Activated CD4-positive, alpha-beta memory T cell treated with anti-CD3 and anti-CD28 coated beads, Interleukin-2, amount 10 ng/mL, durations not matched to agents 7 days and 5 days (primary cell): ENCODE measurements at regions of chr17 and their contacts with region 1.

Region 1: DNA sequence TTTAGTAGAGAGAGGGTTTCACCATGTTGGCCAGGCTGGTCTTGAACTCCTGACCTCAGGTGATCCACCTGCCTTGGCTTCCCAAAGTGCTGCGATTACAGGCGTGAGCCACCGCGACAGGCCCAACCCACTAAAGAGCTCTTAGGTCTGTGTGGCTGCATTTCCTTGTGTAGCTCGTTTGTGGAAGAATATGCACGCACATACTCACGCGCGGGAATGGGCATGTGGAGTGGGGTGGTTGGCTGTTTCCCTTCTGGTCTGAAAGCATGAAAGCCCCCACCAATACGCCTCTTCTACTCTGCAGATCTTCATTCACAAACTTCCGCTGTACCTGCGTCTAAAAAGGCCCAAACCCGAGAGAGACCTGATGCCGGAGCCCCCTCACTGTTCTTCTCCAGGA is 10.1 kb downstream of the CHRNB1 start:
- DNase-seq: no peak
- H3K4me3 Mint-ChIP-seq: peak overlapping the region; percentile 91
- H3K27ac Mint-ChIP-seq: peak overlapping the region; percentile 92
- H3K4me1 Mint-ChIP-seq: peaks cover 30% of the 10 kb centered on the region
- H3K27me3 Mint-ChIP-seq: no peaks in the 10 kb centered on the region

Region 2: DNA sequence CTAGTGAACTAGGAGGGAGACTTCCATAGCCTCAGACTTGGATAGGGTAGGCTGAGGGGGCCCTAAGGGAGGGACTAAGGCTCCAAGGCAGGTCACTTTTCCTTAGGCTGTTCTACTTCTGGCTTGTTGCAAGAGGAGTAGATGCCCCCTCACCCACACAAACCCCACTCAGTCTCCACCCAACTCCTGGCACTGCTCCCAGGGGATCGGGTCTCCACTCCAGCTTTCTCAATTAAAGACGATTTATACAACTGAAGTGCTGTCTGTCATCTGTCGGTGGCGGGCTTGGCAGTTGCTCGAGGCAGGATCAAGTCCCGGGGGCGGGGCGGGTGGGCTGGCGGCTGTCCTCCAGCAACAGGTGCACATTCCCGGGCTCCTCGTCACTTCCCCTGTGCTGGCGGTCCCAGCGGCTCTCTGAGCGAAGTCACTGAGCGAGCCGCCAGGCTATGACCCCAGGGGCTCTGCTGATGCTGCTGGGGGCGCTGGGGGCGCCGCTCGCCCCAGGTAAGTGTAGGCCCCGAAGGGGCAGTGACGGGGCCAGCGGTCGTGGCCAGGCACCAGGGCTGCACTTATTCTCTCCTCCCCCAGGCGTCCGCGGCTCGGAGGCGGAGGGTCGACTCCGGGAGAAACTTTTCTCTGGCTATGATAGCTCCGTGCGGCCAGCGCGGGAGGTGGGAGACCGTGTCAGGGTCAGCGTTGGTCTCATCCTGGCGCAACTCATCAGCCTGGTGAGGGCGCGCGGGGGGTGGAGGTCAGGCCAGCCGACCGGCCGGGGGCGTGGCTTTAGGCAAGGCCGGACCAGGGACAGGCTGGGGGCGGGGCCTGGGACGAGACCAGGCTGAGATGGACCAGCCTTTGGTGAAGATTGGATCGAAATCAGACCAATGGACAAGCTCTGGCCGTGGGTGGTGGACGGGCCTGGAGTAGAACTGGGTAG is 10.0 kb before region 1 on chr17 and contains the start of gene CHRNB1:
- CTCF ChIA-PET with region 1: interaction called, 12 read pairs
- POLR2A ChIA-PET with region 1: interaction called, 37 read pairs
- DNase-seq: peak; percentile 21
- H3K4me3 Mint-ChIP-seq: peak within 1 kb of the TSS; percentile 59
- H3K27ac Mint-ChIP-seq: no peak within 1 kb of the TSS
- H3K4me1 Mint-ChIP-seq: peaks cover 26% of the 10 kb centered on the region
- H3K27me3 Mint-ChIP-seq: peaks cover 65% of the 10 kb centered on the region
- total RNA-seq, gene CHRNB1: 13.0 to 14.6 TPM

Region 3: GRCh38 chr17:7477392-7478275 is 22.7 kb after region 1 on chr17:
- CTCF ChIA-PET with region 1: no interaction called
- POLR2A ChIA-PET with region 1: interaction called, 81 read pairs
- DNase-seq: no peak
- H3K4me3 Mint-ChIP-seq: peak overlapping the region; percentile 86
- H3K27ac Mint-ChIP-seq: peak overlapping the region; percentile 83
- H3K4me1 Mint-ChIP-seq: peaks cover 52% of the 10 kb centered on the region
- H3K27me3 Mint-ChIP-seq: no peaks in the 10 kb centered on the region